Heart right ventricle (tissue), 16 donors: ENCODE measurements at regions of chr2 and their contacts with region 1.

Region 1: DNA sequence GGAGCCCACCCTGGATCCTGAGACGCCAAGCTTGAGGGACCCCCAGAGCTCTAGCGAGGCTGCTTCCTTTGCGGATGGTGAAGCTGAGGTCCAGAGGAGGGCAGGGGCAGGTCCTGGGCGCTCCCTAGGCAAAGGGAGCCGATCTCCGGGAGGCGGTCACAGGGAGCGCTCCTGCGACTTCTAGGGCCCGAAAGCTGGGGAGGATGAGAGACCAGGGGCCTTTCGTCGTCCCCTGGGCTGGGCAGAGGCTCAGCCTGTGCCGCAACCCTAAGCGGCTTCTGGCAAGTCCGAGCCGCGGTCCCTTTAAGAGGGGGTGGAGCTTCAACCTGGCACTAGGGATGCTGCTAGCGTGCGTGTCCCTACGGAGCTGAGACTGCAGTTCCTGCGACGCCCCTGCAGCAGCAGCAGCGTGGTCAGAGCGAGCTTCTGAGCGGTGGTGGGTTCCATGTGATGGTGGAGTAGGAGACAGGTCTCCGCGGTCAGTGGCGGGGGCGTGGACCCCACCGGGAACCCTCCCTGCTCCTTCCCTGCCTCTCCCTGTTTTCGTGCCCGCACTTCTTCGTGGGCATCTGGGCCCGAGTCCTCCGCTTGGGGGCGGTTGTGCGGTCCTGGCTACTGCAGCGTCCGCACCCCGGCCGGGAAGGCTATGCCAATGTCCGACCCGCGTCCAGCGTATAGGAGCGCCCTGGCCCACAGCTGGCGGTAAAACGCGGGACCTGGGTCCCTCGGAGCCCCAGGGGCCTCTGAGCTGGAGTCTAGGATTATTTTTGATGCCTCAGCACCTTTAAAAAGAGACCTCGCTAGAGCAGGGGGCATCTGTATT is 154.6 kb downstream of the CCDC74A start:
- DNase-seq: peak; percentile 79 to 82
- ATAC-seq: peak; percentile 97 to 100 (median 99)
- H3K4me3 ChIP-seq: peak overlapping the region; percentile 23 to 81 (median 66)
- H3K27ac ChIP-seq: peak overlapping the region; percentile 38 to 93 (median 76)
- H3K4me1 ChIP-seq: peaks cover 0 to 19% (median 9%) of the 10 kb centered on the region in 9 donors
- H3K27me3 ChIP-seq: peaks cover 0 to under 1% (median 0%) of the 10 kb centered on the region in 7 donors
- CTCF ChIP-seq: peak in 5 of 9 donors; percentile 11 to 40 (median 28)

Region 2: GRCh38 chr2:131557558-131558321 is 124.6 kb before region 1 on chr2:
- intact Hi-C with region 1: no loop called
- DNase-seq: no peak
- ATAC-seq: no peak
- H3K4me3 ChIP-seq: no peak overlapping the region
- H3K27ac ChIP-seq: no peak overlapping the region
- H3K4me1 ChIP-seq: no peaks in the 10 kb centered on the region
- H3K27me3 ChIP-seq: peaks cover 0 to 15% (median 3%) of the 10 kb centered on the region in 7 donors
- CTCF ChIP-seq: no peak

Region 3: DNA sequence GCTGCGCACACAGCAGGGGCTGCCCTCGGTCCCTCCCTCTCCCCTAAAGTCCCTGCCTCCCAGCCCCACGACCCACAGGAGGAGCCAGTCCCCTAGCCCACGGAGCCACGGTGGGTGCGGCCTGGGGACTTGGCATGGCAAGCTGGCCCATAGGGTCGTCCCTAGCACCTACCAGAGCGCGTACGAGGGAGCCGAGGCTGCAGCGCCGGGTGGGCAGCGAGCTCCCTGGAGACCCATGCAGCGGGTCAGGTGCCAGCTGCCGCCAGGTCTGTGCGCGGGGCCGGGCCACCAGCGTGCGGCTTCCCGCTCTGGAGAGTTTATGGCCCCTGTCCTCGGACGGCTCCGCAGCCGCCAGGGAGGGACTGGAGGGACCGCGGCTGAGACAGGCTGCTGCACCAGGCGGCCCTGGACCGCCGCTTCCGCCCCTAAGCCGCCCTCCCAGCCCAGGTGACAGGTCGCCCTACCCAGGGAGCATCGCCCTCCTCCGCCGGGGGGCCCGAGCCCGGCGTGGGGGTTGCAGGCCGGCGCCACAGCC is 118.9 kb after region 1 on chr2:
- intact Hi-C with region 1: loop called in 4 of 10 experiments (anchors 5 to 10 kb)
- DNase-seq: peak in 1 of 2 donors; percentile 19
- ATAC-seq: no peak
- H3K4me3 ChIP-seq: peak overlapping the region in 6 of 10 donors; percentile 33 to 50 (median 41)
- H3K27ac ChIP-seq: no peak overlapping the region
- H3K4me1 ChIP-seq: peaks cover 0 to 13% (median 4%) of the 10 kb centered on the region in 9 donors
- H3K27me3 ChIP-seq: peaks cover 0 to 18% (median 7%) of the 10 kb centered on the region in 7 donors
- CTCF ChIP-seq: no peak

Region 4: GRCh38 chr2:131816831-131817230 is 134.5 kb after region 1 on chr2:
- intact Hi-C with region 1: no loop called
- DNase-seq: no peak
- ATAC-seq: no peak
- H3K4me3 ChIP-seq: no peak overlapping the region
- H3K27ac ChIP-seq: no peak overlapping the region
- H3K4me1 ChIP-seq: no peaks in the 10 kb centered on the region
- H3K27me3 ChIP-seq: no peaks in the 10 kb centered on the region
- CTCF ChIP-seq: no peak

Region 5: DNA sequence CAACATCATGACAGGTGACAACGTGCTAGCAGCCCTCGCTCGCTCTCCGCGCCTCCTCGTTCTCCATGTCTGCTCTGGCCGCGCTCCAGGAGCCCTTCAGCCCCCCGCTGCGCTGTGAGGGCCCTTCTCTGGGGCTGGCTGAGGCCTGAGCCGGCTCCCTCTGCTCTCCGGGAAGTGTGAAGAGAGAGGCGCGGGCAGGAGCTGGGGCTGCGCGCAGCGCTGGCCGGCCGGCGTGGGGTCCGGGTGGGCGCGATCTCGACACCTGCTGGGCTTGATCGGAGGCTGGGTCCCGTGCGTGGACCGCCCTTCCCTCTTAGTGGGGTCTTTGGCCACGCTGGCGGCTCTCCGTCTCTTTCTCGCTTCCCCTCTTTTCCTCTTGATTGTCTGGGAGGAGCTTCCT is 283.9 kb after region 1 on chr2:
- intact Hi-C with region 1: no loop called
- DNase-seq: no peak
- ATAC-seq: no peak
- H3K4me3 ChIP-seq: no peak overlapping the region
- H3K27ac ChIP-seq: no peak overlapping the region
- H3K4me1 ChIP-seq: no peaks in the 10 kb centered on the region
- H3K27me3 ChIP-seq: no peaks in the 10 kb centered on the region
- CTCF ChIP-seq: no peak